AG04450 (cell line): ENCODE measurements at regions of chr15 and their contacts with region 1.

Region 1: GRCh38 chr15:68252925-68253534 is 23.5 kb upstream of the CLN6 start:
- DNase-seq: peak; percentile 66
- H3K4me3 ChIP-seq: no peak overlapping the region
- H3K27ac ChIP-seq: no peak overlapping the region
- H3K27me3 ChIP-seq: peaks cover 2% of the 10 kb centered on the region
- CTCF ChIP-seq: peak; percentile 89

Region 2: GRCh38 chr15:68241088-68241935 is 11.7 kb before region 1 on chr15:
- CTCF ChIA-PET with region 1: interaction called, 29 read pairs
- POLR2A ChIA-PET with region 1: no interaction called
- DNase-seq: no peak
- H3K4me3 ChIP-seq: no peak overlapping the region
- H3K27ac ChIP-seq: no peak overlapping the region
- H3K27me3 ChIP-seq: no peaks in the 10 kb centered on the region
- CTCF ChIP-seq: no peak

Region 3: GRCh38 chr15:68292157-68292781 is 39.2 kb after region 1 on chr15:
- CTCF ChIA-PET with region 1: interaction called, 14 read pairs
- POLR2A ChIA-PET with region 1: no interaction called
- DNase-seq: no peak
- H3K4me3 ChIP-seq: no peak overlapping the region
- H3K27ac ChIP-seq: no peak overlapping the region
- H3K27me3 ChIP-seq: no peaks in the 10 kb centered on the region
- CTCF ChIP-seq: no peak

Region 4: DNA sequence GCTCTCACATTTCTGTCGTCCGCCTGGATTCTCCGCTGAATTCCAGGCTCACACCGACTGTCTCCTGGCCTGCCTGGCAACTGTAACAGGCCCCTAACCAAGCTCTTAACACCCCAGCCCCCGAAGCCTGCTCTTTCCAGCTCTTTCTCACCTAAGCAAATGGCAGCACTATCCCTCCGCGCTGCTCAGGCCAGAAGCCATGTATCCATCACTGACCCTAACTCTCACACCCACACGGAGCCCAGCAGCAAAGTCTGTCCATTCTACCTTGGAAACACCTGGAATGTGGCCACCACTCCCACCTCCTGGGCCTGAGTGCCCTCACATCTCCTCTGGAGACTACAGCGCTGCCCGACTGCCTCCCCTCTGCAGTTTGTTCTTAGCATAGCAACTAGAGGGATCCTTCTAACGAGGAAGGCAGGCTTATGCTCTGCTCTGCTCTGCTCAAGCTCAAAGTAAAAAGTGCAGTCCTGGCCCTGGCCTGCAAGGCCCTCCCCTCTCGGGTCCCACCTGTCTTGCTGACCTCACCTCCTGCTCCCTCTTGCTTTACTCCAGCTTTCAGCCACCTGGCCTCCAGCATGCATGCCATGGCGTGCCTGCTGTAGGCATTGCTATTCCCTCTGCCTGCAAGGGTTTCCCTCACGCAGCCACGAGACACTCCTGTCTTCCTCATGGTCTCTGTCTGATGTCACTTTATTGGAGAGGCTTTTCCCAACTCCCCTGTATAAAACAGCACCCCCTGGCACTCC is 51.7 kb after region 1 on chr15:
- CTCF ChIA-PET with region 1: interaction called, 48 read pairs
- POLR2A ChIA-PET with region 1: interaction called, 5 read pairs
- DNase-seq: no peak
- H3K4me3 ChIP-seq: no peak overlapping the region
- H3K27ac ChIP-seq: no peak overlapping the region
- H3K27me3 ChIP-seq: no peaks in the 10 kb centered on the region
- CTCF ChIP-seq: no peak

Region 5: DNA sequence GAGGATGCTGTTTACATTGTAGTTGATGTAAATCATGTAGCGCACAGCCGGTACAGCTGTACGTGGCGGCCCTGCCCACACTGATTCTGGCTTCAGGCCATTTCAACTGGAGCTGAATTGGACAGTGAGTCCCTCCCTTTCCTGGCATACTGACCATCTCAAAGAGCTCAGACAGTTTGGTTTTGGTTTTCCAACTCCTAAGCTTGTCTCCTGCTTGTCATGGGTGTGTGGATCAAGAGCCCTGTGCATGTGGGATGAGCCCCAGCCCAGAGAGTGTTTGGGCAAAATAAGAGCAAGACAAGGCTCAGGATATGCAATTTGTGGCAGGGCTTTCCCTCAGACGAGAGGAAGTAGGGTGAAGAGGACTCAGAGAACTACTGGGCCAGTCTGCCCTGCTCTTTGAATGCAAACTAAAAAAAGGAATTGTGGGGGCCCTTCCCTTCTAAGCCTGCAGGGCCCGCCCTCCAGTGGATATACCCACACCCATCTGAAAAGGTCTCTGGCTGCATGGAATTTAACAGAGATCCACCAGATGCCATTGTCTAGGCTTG is 165.7 kb after region 1 on chr15:
- CTCF ChIA-PET with region 1: no interaction called
- POLR2A ChIA-PET with region 1: no interaction called
- DNase-seq: peak; percentile 82
- H3K4me3 ChIP-seq: no peak overlapping the region
- H3K27ac ChIP-seq: peak overlapping the region; percentile 65
- H3K27me3 ChIP-seq: no peaks in the 10 kb centered on the region
- CTCF ChIP-seq: 0 out of 2 replicates have a peak, but pooled peaks have one; percentile 9

Region 6: DNA sequence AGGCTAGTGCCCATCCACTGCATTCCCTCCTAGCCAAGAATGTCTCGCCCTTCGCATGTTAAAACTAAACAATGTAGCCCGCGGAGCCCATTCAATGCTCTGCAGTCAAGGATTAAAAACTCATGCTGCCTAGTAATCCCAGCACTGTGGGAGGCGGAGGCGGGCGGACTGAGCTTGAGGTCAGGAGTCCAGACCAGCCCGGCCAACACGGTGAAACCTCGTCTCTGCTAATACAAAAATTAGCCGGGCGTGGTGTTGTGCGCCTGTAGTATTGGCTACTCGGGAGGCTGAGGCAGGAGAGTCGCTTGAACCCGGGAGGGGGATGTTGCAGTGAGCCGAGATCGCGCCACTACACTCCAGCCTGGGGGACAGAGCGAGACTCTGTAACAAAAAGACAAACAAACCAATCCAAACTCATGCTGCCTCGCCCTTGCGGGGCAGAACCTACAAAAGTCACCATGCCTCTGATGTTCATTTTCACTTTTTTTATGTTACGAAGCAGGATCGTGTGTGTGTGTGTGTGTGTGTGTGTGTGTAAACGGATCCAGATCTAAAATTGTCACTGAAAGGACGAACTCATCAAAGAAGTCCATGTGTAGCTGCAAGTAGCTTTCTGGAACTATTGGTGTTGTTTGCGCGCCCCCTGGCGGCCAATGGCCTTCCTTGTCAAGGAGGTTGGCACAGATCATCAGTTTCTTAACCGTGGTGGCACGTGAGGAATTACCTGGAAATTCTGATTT is 622.5 kb after region 1 on chr15:
- CTCF ChIA-PET with region 1: interaction called, 22 read pairs
- POLR2A ChIA-PET with region 1: no interaction called
- DNase-seq: peak; percentile 65
- H3K4me3 ChIP-seq: peak overlapping the region; percentile 57
- H3K27ac ChIP-seq: peak overlapping the region; percentile 21
- H3K27me3 ChIP-seq: peaks cover 24% of the 10 kb centered on the region
- CTCF ChIP-seq: peak; percentile 86